ENCODE measurements at regions of chr6 and their contacts with region 1.

Region 1: DNA sequence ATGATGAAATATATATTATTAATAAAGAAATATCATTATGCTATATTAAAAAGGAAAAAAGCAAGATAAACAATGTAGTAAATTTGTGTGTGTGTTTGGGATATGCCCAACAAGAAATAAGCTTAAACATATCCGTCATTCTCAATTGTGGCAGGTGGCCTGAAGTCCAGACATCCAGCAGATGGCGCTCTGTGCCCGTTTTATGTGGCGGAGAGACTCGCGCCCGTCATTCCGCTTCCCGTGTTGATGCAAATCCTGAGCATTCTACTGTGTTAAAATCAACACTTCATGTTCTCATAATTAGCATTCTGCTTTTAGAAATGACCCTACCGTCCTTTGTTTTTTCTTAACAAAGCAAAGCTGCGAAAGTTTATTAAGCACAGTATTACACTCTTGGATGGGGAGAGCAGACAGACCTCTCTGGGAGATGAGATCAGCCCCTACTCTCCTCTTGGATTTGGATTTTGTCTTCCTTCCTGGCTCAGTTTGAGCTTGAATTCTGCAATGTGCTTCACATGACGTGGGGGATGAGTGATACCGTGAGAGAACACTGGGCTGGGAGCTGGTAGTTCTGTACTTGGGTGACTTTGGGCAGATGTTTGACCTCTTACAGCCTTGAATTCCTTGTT is 125.8 kb downstream of the MCHR2 start:
- DNase-seq: peak in 1 of 2 donors; percentile 74
- H3K4me3 ChIP-seq: no peak overlapping the region
- H3K27ac ChIP-seq: no peak overlapping the region
- H3K4me1 ChIP-seq: no peaks in the 10 kb centered on the region
- H3K27me3 ChIP-seq: no peaks in the 10 kb centered on the region
- CTCF ChIP-seq: peak; percentile 15 to 69 (median 67)

Region 2: DNA sequence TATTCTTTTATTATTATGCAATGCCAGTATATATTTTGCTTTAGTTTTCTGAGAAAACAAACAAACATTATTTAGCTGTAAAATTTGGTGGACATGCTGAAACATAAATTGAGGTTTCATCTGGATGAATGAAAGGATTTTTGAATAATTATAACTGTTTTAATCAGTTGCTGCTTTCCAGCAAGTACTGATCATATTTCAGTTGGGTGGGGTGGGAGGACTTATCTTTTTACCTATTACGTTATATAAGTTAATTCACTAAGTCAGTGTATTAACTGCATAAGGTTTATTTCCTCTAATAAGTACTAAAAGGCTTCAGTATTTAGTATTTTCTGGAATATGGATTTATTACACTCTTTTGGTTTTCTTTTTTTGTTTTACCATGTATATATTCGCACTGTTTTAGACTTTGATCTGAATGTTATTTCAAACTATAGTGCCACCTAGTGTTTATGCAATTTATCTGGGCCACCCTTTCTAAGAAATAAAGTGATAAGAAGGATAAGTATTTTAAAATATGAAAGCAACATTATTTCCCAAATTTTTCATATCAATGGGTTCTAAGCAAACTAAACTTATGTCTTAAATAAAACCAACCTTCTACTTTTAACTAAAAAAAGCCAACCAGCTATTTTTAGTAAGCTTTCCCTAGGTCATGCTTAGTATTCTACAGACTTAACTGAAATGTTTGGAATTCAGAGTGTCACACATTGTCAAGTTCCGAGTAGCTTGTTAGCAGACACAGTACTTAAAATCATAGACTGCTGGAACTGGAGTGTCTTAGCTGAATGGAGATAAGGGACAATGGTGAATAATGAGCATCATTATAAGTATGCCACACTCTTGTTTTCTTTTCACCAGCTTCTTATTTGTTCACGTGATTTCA is 231.2 kb after region 1 on chr6:
- intact Hi-C with region 1: loop called (anchors 10 kb)
- DNase-seq: no peak
- H3K4me3 ChIP-seq: no peak overlapping the region
- H3K27ac ChIP-seq: no peak overlapping the region
- H3K4me1 ChIP-seq: no peaks in the 10 kb centered on the region
- H3K27me3 ChIP-seq: no peaks in the 10 kb centered on the region
- CTCF ChIP-seq: peak in 2 of 3 experiments; percentile 21 to 45

Measured in ascending aorta (tissue), 2 donors.